PC-9 (cell line): ENCODE measurements at regions of chr4 and their contacts with region 1.

Region 1: DNA sequence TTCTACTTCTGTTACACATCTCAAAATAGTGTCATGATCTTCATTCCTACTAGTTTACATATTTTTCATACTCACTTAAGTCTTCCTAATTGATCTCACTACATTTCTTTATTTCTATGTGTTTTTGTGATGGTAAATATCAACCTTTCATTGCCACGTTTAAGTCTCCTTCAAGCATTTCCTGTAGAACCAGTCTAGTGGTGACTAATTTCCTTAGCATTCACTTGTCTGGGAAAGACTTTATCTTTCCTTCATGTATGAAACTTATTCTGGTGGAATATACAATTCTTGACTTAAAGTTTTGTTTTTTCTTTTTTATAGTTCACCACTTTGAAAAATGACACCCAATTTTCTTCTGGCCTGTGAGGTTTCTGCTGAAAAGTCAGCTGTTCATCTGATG is 181.4 kb upstream of the NEIL3 start:
- DNase-seq: peak in 1 of 2 experiments; percentile 57
- H3K4me3 ChIP-seq: no peak overlapping the region
- H3K27ac ChIP-seq: peak overlapping the region; percentile 69
- H3K4me1 ChIP-seq: peaks cover 16% of the 10 kb centered on the region
- H3K27me3 ChIP-seq: no peaks in the 10 kb centered on the region
- CTCF ChIP-seq: no peak

Region 2: DNA sequence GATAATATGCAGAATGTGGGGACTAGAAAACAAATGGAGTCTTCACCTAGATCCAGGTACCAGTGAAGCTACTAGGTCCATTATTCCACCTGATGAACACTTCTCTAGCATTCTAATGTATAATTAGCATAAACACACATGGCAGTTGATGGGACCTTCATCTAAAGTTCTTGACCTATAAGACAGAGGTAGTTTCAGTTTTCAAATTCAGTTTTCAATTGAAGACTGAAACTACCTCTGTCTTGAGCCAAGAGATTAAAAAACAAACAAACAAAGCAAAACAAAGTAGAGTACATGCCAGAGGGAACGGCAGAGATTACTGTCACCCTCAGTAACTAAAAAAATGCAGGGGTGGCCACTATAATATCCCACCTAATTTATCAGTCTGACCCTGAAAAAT is 18.5 kb before region 1 on chr4:
- CTCF ChIA-PET with region 1: interaction called, 14 read pairs
- POLR2A ChIA-PET with region 1: no interaction called
- intact Hi-C with region 1: no loop called
- DNase-seq: no peak
- H3K4me3 ChIP-seq: no peak overlapping the region
- H3K27ac ChIP-seq: no peak overlapping the region
- H3K4me1 ChIP-seq: no peaks in the 10 kb centered on the region
- H3K27me3 ChIP-seq: no peaks in the 10 kb centered on the region
- CTCF ChIP-seq: no peak